Naive thymus-derived CD4-positive, alpha-beta T cell (primary cell): ENCODE measurements at regions of chr18 and their contacts with region 1.

Region 1: DNA sequence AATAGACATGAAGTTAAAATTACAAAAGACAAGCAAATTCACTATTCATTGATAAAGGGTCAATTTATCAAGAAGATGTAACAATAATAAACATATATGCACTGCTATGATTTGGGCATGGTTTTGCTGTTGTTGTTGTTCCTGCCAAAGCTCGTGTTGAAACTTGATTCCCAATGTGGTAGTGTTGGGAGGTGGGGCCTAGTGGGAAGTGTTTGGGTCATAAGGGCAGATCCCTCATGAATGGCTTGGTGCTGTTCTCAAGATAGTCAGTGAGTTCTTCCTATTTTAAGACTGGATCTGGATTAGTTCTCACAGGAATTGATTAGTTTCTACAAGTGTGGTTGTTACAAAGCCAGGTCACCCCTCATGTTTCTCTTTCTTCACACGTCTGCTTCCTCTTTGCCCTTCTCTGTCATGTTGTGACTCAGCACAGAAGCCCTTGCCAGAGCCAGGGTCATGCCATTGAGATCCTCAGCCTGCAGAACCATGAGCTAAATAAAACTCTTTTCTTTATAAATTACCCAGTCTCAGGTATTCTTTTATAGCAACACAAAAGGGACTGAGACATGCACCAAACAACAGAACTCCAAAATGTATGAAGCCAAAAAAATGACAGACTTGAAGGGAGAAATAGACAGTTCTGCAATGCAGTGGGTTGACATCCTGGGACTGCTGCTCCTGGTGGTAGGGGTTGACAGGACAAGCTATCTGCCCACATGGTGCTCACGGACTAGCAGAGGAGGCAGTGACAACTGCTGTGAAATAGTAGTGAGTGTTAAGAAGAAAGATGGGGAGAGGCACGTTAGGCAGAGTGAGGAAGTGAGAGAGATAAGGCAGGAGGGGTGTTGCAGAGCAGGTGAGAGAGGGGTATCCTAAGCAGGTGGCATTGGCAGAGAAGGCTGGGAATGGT is 18.6 kb upstream of the SKA1 start:
- DNase-seq: no peak
- ATAC-seq: peak; percentile 68
- H3K4me3 ChIP-seq: no peak overlapping the region
- H3K4me3 Mint-ChIP-seq: peak overlapping the region in 4 of 10 donors; percentile 12 to 55 (median 21)
- H3K27ac ChIP-seq: no peak overlapping the region
- H3K27ac Mint-ChIP-seq: peak overlapping the region in 5 of 9 donors; percentile 4 to 66 (median 49)
- H3K4me1 ChIP-seq: peaks cover 0 to 8% of the 10 kb centered on the region in 2 donors
- H3K4me1 Mint-ChIP-seq: peaks cover 0 to 11% (median 6%) of the 10 kb centered on the region in 7 donors
- H3K27me3 ChIP-seq: no peaks in the 10 kb centered on the region
- H3K27me3 Mint-ChIP-seq: peaks cover 11 to 44% (median 23%) of the 10 kb centered on the region in 5 donors

Region 2: GRCh38 chr18:49486953-49487710 is 869.2 kb before region 1 on chr18 and contains the start of gene C18orf32:
- CTCF ChIA-PET with region 1: no interaction called
- POLR2A ChIA-PET with region 1: no interaction called
- intact Hi-C with region 1: loop called in 1 of 2 experiments (anchors 5 kb)
- DNase-seq: peak; percentile 84 to 93 (median 92)
- ATAC-seq: peak; percentile 94
- H3K4me3 ChIP-seq: peak within 1 kb of the TSS; percentile 95
- H3K4me3 Mint-ChIP-seq: peak within 1 kb of the TSS; percentile 77 to 98 (median 94)
- H3K27ac ChIP-seq: peak within 1 kb of the TSS; percentile 95
- H3K27ac Mint-ChIP-seq: peak within 1 kb of the TSS; percentile 90 to 98 (median 96)
- H3K4me1 ChIP-seq: peaks cover 34 to 39% of the 10 kb centered on the region in 2 donors
- H3K4me1 Mint-ChIP-seq: peaks cover 40 to 83% (median 70%) of the 10 kb centered on the region in 7 donors
- H3K27me3 ChIP-seq: no peaks in the 10 kb centered on the region
- H3K27me3 Mint-ChIP-seq: no peaks in the 10 kb centered on the region
- total RNA-seq, gene C18orf32: 22.5 to 53.6 (median 31.5) TPM

Region 3: GRCh38 chr18:49858309-49859020 is 497.8 kb before region 1 on chr18:
- CTCF ChIA-PET with region 1: interaction called, 8 read pairs
- POLR2A ChIA-PET with region 1: no interaction called
- intact Hi-C with region 1: loop called in 1 of 2 experiments (anchors 1 kb)
- DNase-seq: peak; percentile 13 to 68 (median 33)
- ATAC-seq: no peak
- H3K4me3 ChIP-seq: no peak overlapping the region
- H3K4me3 Mint-ChIP-seq: no peak overlapping the region
- H3K27ac ChIP-seq: no peak overlapping the region
- H3K27ac Mint-ChIP-seq: peak overlapping the region in 2 of 9 donors; percentile 38 to 72
- H3K4me1 ChIP-seq: no peaks in the 10 kb centered on the region
- H3K4me1 Mint-ChIP-seq: peaks cover 0 to 6% (median 0%) of the 10 kb centered on the region in 7 donors
- H3K27me3 ChIP-seq: no peaks in the 10 kb centered on the region
- H3K27me3 Mint-ChIP-seq: peaks cover 0 to 3% (median 0%) of the 10 kb centered on the region in 5 donors

Region 4: GRCh38 chr18:50111265-50111792 is 245.0 kb before region 1 on chr18:
- CTCF ChIA-PET with region 1: interaction called, 3 read pairs
- POLR2A ChIA-PET with region 1: no interaction called
- intact Hi-C with region 1: loop called in 1 of 2 experiments (anchors 5 kb)
- DNase-seq: no peak
- ATAC-seq: no peak
- H3K4me3 ChIP-seq: no peak overlapping the region
- H3K4me3 Mint-ChIP-seq: no peak overlapping the region
- H3K27ac ChIP-seq: no peak overlapping the region
- H3K27ac Mint-ChIP-seq: no peak overlapping the region
- H3K4me1 ChIP-seq: no peaks in the 10 kb centered on the region
- H3K4me1 Mint-ChIP-seq: peaks cover 0 to 3% (median 0%) of the 10 kb centered on the region in 7 donors
- H3K27me3 ChIP-seq: no peaks in the 10 kb centered on the region
- H3K27me3 Mint-ChIP-seq: peaks cover 16 to 37% (median 26%) of the 10 kb centered on the region in 5 donors

Region 5: GRCh38 chr18:50203801-50204604 is 152.3 kb before region 1 on chr18:
- CTCF ChIA-PET with region 1: no interaction called
- POLR2A ChIA-PET with region 1: no interaction called
- intact Hi-C with region 1: loop called (anchors 5 kb)
- DNase-seq: peak in 2 of 9 donors; percentile 17 to 28
- ATAC-seq: no peak
- H3K4me3 ChIP-seq: no peak overlapping the region
- H3K4me3 Mint-ChIP-seq: peak overlapping the region in 6 of 10 donors; percentile 20 to 61 (median 32)
- H3K27ac ChIP-seq: no peak overlapping the region
- H3K27ac Mint-ChIP-seq: no peak overlapping the region
- H3K4me1 ChIP-seq: no peaks in the 10 kb centered on the region
- H3K4me1 Mint-ChIP-seq: peaks cover 5 to 12% (median 9%) of the 10 kb centered on the region in 7 donors
- H3K27me3 ChIP-seq: peaks cover 0 to 3% of the 10 kb centered on the region in 2 donors
- H3K27me3 Mint-ChIP-seq: peaks cover 48 to 61% (median 57%) of the 10 kb centered on the region in 5 donors

Region 6: DNA sequence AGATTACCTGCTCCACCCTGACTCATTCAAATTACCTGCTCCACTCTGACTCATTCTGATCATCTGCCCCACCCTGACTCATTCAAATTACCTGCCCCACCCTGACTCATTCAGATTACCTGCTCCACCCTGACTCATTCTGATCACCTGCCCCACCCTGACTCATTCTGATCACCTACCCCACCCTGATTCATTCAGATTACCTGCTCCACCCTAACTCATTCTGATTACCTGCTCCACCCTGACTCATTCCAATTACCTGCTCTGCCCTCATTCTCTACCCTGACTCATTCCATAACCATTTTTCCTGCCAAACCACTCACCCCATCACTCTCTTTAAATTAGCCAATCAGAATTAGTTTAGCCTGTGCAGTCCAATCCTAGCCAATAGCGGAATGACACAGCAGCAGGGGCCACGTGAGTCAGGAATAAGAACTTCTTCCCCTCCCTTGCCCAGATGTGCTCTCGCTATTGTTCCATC is 116.2 kb before region 1 on chr18:
- CTCF ChIA-PET with region 1: no interaction called
- POLR2A ChIA-PET with region 1: no interaction called
- intact Hi-C with region 1: no loop called
- DNase-seq: no peak
- ATAC-seq: no peak
- H3K4me3 ChIP-seq: no peak overlapping the region
- H3K4me3 Mint-ChIP-seq: peak overlapping the region in 1 of 10 donors; percentile 0
- H3K27ac ChIP-seq: no peak overlapping the region
- H3K27ac Mint-ChIP-seq: peak overlapping the region in 1 of 9 donors; percentile 15
- H3K4me1 ChIP-seq: no peaks in the 10 kb centered on the region
- H3K4me1 Mint-ChIP-seq: peaks cover 0 to 6% (median 0%) of the 10 kb centered on the region in 7 donors
- H3K27me3 ChIP-seq: no peaks in the 10 kb centered on the region
- H3K27me3 Mint-ChIP-seq: peaks cover 1 to 20% (median 12%) of the 10 kb centered on the region in 5 donors

Region 7: DNA sequence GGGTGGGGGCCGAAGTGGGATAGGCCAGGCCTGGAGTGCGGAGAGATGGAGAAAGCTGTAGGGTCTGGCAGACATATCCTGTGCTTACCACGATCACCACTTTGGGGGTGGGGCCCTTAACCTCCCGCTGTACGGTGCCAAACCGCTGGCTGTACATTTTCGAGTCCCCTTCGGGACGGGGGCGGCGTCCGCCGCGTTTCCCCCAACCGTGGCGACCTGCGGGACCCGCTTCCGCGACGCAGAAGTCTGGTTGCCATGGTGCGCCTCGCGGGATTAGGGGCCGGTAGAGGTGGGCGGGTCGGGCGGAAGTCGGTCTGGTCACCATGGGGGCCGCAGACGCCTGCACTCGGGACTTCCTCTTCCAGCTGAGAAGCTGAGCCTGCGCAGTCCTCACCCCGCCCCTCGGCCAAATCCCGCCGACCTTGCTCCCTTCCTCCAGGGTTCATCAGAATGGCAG is 90.0 kb before region 1 on chr18 and contains the start of gene CFAP53:
- CTCF ChIA-PET with region 1: interaction called, 7 read pairs
- POLR2A ChIA-PET with region 1: interaction called, 3 read pairs
- intact Hi-C with region 1: loop called (anchors 1 kb)
- DNase-seq: peak; percentile 51 to 83 (median 69)
- ATAC-seq: peak; percentile 88
- H3K4me3 ChIP-seq: peak within 1 kb of the TSS; percentile 59
- H3K4me3 Mint-ChIP-seq: peak within 1 kb of the TSS; percentile 79 to 94 (median 90)
- H3K27ac ChIP-seq: peak within 1 kb of the TSS; percentile 50
- H3K27ac Mint-ChIP-seq: peak within 1 kb of the TSS; percentile 57 to 92 (median 81)
- H3K4me1 ChIP-seq: peaks cover 4 to 5% of the 10 kb centered on the region in 2 donors
- H3K4me1 Mint-ChIP-seq: peaks cover 9 to 29% (median 25%) of the 10 kb centered on the region in 7 donors
- H3K27me3 ChIP-seq: no peaks in the 10 kb centered on the region
- H3K27me3 Mint-ChIP-seq: peaks cover 0 to 17% (median 0%) of the 10 kb centered on the region in 5 donors
- total RNA-seq, gene CFAP53: 0.19 to 1.8 (median 0.64) TPM

Region 8: DNA sequence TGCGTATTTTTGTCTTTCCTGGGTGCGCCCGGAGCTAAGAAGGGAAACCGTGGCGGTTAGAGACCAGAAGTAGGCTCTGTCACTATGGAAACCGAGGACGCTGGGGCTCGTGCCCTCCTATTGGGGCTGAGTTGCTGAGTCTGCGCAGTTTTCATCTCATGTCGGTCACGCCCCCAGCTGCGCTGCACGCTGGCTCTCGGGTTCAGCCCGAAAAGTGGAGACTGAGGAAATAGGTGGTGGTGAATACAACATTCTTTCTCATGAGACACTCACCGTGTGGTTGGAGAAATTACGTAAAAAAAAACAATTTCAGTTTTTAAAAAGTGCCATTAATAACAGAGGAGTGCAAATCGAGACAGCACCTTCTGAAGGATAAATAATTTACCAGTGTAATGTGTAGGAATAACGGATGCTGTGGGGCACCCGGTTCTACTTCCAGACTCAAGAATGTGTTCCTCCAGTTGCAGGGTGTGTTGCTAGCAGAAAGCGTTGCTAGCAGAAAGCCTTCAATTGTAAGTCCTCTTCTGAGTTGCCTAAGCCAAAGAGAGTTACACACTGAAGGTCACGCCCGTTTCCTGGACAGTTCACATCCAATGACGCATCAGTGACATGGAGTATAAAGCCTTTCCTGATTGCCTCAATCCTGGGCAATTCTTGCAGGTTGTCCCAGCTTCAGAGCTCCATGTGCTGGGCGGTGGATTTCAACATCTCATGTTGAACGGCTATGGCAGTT is 48.4 kb before region 1 on chr18:
- CTCF ChIA-PET with region 1: interaction called, 8 read pairs
- POLR2A ChIA-PET with region 1: no interaction called
- intact Hi-C with region 1: loop called (anchors 1 kb)
- DNase-seq: peak; percentile 70 to 93 (median 89)
- ATAC-seq: peak; percentile 96
- H3K4me3 ChIP-seq: peak overlapping the region; percentile 45
- H3K4me3 Mint-ChIP-seq: peak overlapping the region; percentile 76 to 97 (median 92)
- H3K27ac ChIP-seq: peak overlapping the region; percentile 65
- H3K27ac Mint-ChIP-seq: peak overlapping the region; percentile 52 to 93 (median 82)
- H3K4me1 ChIP-seq: peaks cover 0 to 8% of the 10 kb centered on the region in 2 donors
- H3K4me1 Mint-ChIP-seq: peaks cover 0 to 20% (median 16%) of the 10 kb centered on the region in 7 donors
- H3K27me3 ChIP-seq: peaks cover 0 to 3% of the 10 kb centered on the region in 2 donors
- H3K27me3 Mint-ChIP-seq: peaks cover 0 to 35% (median 19%) of the 10 kb centered on the region in 5 donors

Region 9: GRCh38 chr18:50340078-50340477 is 16.2 kb before region 1 on chr18:
- CTCF ChIA-PET with region 1: no interaction called
- POLR2A ChIA-PET with region 1: no interaction called
- intact Hi-C with region 1: no loop called
- DNase-seq: no peak
- ATAC-seq: no peak
- H3K4me3 ChIP-seq: no peak overlapping the region
- H3K4me3 Mint-ChIP-seq: no peak overlapping the region
- H3K27ac ChIP-seq: no peak overlapping the region
- H3K27ac Mint-ChIP-seq: no peak overlapping the region
- H3K4me1 ChIP-seq: no peaks in the 10 kb centered on the region
- H3K4me1 Mint-ChIP-seq: peaks cover 0 to 2% (median 0%) of the 10 kb centered on the region in 7 donors
- H3K27me3 ChIP-seq: no peaks in the 10 kb centered on the region
- H3K27me3 Mint-ChIP-seq: peaks cover 0 to 6% (median 0%) of the 10 kb centered on the region in 5 donors